ENCODE measurements at regions of chr17 and their contacts with region 1.

Region 1: DNA sequence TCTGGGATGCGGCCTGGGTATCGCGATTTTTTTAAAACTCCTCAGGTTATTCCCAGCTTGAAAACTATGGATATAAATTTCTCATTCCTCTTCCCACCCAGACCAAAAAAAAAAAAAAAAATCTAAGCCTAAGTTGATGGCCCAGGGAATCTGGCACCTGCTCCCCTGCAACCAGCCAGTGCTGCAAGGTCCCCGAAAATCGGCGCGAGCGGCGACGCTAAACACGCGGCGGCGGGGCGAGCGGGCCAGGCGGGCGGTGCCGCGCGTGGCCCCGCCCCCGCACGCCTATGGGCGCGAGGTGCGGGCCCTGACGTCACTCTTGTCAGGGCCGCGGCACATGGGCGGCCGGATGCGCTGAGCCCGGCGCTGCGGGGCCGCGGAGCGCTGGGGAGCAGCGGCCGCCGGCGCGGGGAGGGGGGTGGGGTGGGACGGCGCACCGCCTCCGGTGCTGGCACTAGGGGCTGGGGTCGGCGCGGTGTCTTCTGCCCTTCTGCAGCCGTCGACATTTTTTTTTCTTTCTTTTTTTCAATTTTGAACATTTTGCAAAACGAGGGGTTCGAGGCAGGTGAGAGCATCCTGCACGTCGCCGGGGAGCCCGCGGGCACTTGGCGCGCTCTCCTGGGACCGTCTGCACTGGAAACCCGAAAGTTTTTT is at the start of gene HLF:
- DNase-seq: peak; percentile 83
- H3K4me3 ChIP-seq: peak within 1 kb of the TSS; percentile 73
- H3K27ac ChIP-seq: peak within 1 kb of the TSS; percentile 86
- H3K4me1 ChIP-seq: peaks cover 62% of the 10 kb centered on the region
- H3K27me3 ChIP-seq: peaks cover 37% of the 10 kb centered on the region
- CTCF ChIP-seq: no peak
- total RNA-seq, gene HLF: 22.6 TPM

Region 2: DNA sequence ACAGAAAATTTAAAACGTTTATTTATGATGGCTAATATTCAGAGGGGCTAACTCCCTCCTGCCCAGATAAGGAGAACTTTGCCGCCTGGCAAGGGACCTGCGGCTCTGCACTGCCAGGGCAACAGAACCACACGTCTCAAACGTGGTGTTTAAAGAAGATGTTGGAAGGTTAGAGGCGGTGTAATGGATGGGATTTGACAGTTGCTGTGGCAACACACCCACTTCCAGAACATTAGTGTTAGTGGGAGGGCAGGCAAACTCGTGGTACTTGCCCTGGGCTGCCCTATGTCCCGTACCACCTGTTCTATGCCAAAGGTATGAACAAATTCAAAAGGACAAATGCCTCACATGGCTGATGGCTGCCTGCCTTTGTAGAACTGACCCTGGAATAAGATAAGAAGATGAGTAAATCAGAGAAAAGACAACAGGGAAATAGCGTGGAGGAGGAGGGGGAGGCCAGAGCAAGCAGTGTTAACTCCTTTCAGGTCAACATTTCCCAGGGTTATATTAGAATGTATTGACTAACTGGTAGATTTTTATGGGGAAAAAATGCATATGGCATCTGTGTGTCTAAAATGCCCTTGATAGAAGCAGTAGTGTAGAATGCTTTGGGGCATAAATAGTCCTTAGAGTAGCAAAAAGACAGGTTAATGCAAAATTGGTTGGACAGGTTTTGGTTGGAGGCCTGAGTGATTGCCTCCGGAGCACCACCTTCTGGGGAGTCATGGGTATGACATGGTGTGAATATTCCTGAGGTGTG is 30.8 kb after region 1 on chr17:
- intact Hi-C with region 1: loop called (anchors 5 kb)
- DNase-seq: no peak
- H3K4me3 ChIP-seq: no peak overlapping the region
- H3K27ac ChIP-seq: peak overlapping the region; percentile 76
- H3K4me1 ChIP-seq: peaks cover 30% of the 10 kb centered on the region
- H3K27me3 ChIP-seq: no peaks in the 10 kb centered on the region
- CTCF ChIP-seq: peak; percentile 93

Region 3: GRCh38 chr17:55564081-55564480 is 299.3 kb after region 1 on chr17:
- intact Hi-C with region 1: no loop called
- DNase-seq: no peak
- H3K4me3 ChIP-seq: no peak overlapping the region
- H3K27ac ChIP-seq: no peak overlapping the region
- H3K4me1 ChIP-seq: no peaks in the 10 kb centered on the region
- H3K27me3 ChIP-seq: peaks cover 4% of the 10 kb centered on the region
- CTCF ChIP-seq: no peak

Region 4: DNA sequence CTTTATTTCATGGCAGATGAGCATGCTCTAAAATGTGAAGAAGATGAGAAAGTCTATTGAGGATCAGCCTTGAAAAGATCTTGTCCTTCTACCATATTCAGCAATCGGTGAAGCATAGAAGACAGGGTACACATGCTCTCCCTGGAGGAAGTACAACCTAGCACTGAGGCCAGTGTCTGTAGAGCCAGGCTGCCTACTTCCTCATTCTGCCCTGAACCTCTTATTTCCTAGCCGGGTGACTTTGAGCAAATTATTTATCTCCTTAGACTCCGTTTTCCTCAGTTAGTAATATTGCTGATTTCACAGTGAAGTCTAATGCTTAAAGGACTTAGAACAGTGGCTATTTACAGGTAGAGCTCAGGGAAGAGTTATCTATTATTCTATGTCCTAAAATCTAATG is 399.5 kb after region 1 on chr17:
- intact Hi-C with region 1: no loop called
- DNase-seq: no peak
- H3K4me3 ChIP-seq: no peak overlapping the region
- H3K27ac ChIP-seq: no peak overlapping the region
- H3K4me1 ChIP-seq: peaks cover 15% of the 10 kb centered on the region
- H3K27me3 ChIP-seq: peaks cover 6% of the 10 kb centered on the region
- CTCF ChIP-seq: no peak

Measured in left ventricle myocardium inferior (tissue), 1 donor.